B cell (primary cell): ENCODE measurements at regions of chr14 and their contacts with region 1.

Region 1: GRCh38 chr14:21071225-21072030 is 1.3 kb downstream of the ARHGEF40 start:
- DNase-seq: peak; percentile 79
- ATAC-seq: peak; percentile 73
- H3K4me3 ChIP-seq: peak overlapping the region; percentile 17 to 69 (median 53)
- H3K4me3 Mint-ChIP-seq: peak overlapping the region; percentile 93
- H3K27ac ChIP-seq: no peak overlapping the region
- H3K27ac Mint-ChIP-seq: peak overlapping the region; percentile 73
- H3K4me1 ChIP-seq: peaks cover 34 to 40% of the 10 kb centered on the region in 2 donors
- H3K4me1 Mint-ChIP-seq: peaks cover 44% of the 10 kb centered on the region
- H3K27me3 ChIP-seq: peaks cover 0 to 50% (median 18%) of the 10 kb centered on the region in 4 experiments
- H3K27me3 Mint-ChIP-seq: peaks cover 24% of the 10 kb centered on the region
- CTCF ChIP-seq: no peak

Region 2: GRCh38 chr14:21024585-21025370 is 46.6 kb before region 1 on chr14 and contains the start of gene NDRG2:
- CTCF ChIA-PET with region 1: interaction called, 5 read pairs
- POLR2A ChIA-PET with region 1: interaction called, 3 read pairs
- intact Hi-C with region 1: loop called (anchors 2 kb)
- DNase-seq: peak; percentile 83
- ATAC-seq: peak; percentile 94
- H3K4me3 ChIP-seq: peak within 1 kb of the TSS; percentile 15 to 86 (median 75)
- H3K4me3 Mint-ChIP-seq: peak within 1 kb of the TSS; percentile 93
- H3K27ac ChIP-seq: no peak within 1 kb of the TSS
- H3K27ac Mint-ChIP-seq: peak within 1 kb of the TSS; percentile 67
- H3K4me1 ChIP-seq: peaks cover 12 to 23% of the 10 kb centered on the region in 2 donors
- H3K4me1 Mint-ChIP-seq: peaks cover 19% of the 10 kb centered on the region
- H3K27me3 ChIP-seq: peaks cover 0 to 30% (median 8%) of the 10 kb centered on the region in 4 experiments
- H3K27me3 Mint-ChIP-seq: peaks cover 16% of the 10 kb centered on the region
- CTCF ChIP-seq: no peak
- total RNA-seq, gene NDRG2: 9.5 and 10.2 TPM in 2 replicates

Region 3: DNA sequence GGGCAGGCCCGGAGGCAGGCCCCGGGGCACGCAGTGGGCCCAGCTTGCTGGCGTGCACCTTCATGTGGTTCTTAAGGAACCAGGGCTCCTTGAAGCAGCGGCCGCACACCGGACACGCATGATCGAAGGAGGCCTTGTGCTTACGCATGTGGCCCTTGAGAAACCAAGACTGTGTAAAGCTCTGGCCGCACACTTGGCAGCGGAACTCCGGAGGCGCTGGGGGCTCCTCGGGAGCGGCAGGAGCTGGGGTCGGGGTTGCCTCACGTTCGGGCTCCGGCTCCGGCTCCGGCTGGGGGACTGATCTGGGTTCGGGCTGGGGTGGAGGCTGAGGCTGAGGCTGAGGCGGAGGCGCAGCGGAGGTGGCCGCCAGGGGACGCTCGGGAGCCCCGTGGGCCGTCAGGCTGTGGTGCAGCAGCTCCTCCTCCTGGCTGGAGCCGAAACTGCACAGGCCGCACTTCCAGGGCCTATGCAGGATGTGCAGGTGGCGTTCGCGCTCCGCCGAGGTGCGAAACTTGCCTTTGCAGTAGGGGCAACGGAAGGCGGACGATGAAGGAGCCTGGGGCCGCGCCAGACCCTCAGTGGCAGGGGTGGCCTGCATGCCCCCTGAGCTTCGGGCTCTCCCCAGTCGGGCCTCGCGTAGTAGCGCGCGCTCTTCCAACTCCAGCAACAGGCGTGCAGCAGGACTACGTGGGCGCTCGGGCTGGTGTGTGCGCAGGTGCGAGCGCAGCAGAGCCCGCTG is 21.0 kb after region 1 on chr14:
- CTCF ChIA-PET with region 1: interaction called, 155 read pairs
- POLR2A ChIA-PET with region 1: interaction called, 10 read pairs
- intact Hi-C with region 1: loop called (anchors 1 kb)
- DNase-seq: peak; percentile 93
- ATAC-seq: peak; percentile 99
- H3K4me3 ChIP-seq: no peak overlapping the region
- H3K4me3 Mint-ChIP-seq: peak overlapping the region; percentile 27
- H3K27ac ChIP-seq: no peak overlapping the region
- H3K27ac Mint-ChIP-seq: peak overlapping the region; percentile 72
- H3K4me1 ChIP-seq: peaks cover 6 to 16% of the 10 kb centered on the region in 2 donors
- H3K4me1 Mint-ChIP-seq: peaks cover 14% of the 10 kb centered on the region
- H3K27me3 ChIP-seq: peaks cover 0 to 4% (median 0%) of the 10 kb centered on the region in 4 experiments
- H3K27me3 Mint-ChIP-seq: no peaks in the 10 kb centered on the region
- CTCF ChIP-seq: peak; percentile 100

Region 4: GRCh38 chr14:21098076-21098891 is 26.9 kb after region 1 on chr14 and contains the start of gene ZNF219:
- CTCF ChIA-PET with region 1: interaction called, 276 read pairs
- POLR2A ChIA-PET with region 1: interaction called, 27 read pairs
- intact Hi-C with region 1: loop called (anchors 1 kb)
- DNase-seq: peak; percentile 42
- ATAC-seq: peak; percentile 62
- H3K4me3 ChIP-seq: peak within 1 kb of the TSS; percentile 44 to 61 (median 58)
- H3K4me3 Mint-ChIP-seq: peak within 1 kb of the TSS; percentile 85
- H3K27ac ChIP-seq: no peak within 1 kb of the TSS
- H3K27ac Mint-ChIP-seq: peak within 1 kb of the TSS; percentile 59
- H3K4me1 ChIP-seq: peaks cover 16 to 21% of the 10 kb centered on the region in 2 donors
- H3K4me1 Mint-ChIP-seq: peaks cover 12% of the 10 kb centered on the region
- H3K27me3 ChIP-seq: peaks cover 0 to 29% (median 17%) of the 10 kb centered on the region in 4 experiments
- H3K27me3 Mint-ChIP-seq: peaks cover 26% of the 10 kb centered on the region
- CTCF ChIP-seq: no peak
- total RNA-seq, gene ZNF219: 3.5 and 6.4 TPM in 2 replicates

Region 5: DNA sequence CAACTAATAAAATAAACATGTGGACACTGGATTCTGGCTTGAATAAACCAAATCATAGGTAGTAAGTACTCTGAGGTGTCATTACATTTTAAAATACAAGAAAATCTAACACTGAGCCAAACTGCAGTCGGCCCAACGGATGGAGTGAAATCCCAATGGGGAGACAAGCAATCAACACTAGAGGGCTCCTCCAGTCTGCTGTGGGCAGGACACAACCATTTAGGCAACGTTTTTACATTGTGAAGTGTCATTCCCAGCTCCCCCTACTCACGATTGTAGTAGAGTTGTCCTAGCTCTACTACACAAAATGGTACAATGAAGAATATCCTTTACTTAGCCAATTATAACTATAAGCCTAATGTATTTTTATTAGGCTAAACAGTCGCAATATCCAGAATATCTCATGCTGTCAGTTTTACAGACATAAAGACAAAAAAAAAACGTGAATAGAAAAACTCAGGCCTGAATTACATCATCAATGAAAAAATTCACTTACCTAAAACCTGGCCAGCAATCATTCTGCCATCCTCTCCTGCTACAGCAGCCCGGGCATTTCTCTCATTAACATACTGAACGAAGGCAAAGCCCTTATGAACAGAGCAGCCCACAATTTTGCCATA is 162.1 kb after region 1 on chr14:
- CTCF ChIA-PET with region 1: no interaction called
- POLR2A ChIA-PET with region 1: no interaction called
- intact Hi-C with region 1: no loop called
- DNase-seq: no peak
- ATAC-seq: no peak
- H3K4me3 ChIP-seq: no peak overlapping the region
- H3K4me3 Mint-ChIP-seq: no peak overlapping the region
- H3K27ac ChIP-seq: no peak overlapping the region
- H3K27ac Mint-ChIP-seq: peak overlapping the region; percentile 6
- H3K4me1 ChIP-seq: peaks cover 0 to 8% of the 10 kb centered on the region in 2 donors
- H3K4me1 Mint-ChIP-seq: peaks cover 52% of the 10 kb centered on the region
- H3K27me3 ChIP-seq: no peaks in the 10 kb centered on the region
- H3K27me3 Mint-ChIP-seq: no peaks in the 10 kb centered on the region
- CTCF ChIP-seq: no peak